ENCODE measurements at regions of chr16 and their contacts with region 1.

Region 1: GRCh38 chr16:47699106-47699505 is 238.0 kb downstream of the PHKB start:
- DNase-seq: no peak
- H3K4me3 ChIP-seq: no peak overlapping the region
- H3K27ac ChIP-seq: no peak overlapping the region
- H3K4me1 ChIP-seq: no peaks in the 10 kb centered on the region
- H3K27me3 ChIP-seq: no peaks in the 10 kb centered on the region
- CTCF ChIP-seq: no peak
- POLR2A ChIP-seq: no peak

Region 2: DNA sequence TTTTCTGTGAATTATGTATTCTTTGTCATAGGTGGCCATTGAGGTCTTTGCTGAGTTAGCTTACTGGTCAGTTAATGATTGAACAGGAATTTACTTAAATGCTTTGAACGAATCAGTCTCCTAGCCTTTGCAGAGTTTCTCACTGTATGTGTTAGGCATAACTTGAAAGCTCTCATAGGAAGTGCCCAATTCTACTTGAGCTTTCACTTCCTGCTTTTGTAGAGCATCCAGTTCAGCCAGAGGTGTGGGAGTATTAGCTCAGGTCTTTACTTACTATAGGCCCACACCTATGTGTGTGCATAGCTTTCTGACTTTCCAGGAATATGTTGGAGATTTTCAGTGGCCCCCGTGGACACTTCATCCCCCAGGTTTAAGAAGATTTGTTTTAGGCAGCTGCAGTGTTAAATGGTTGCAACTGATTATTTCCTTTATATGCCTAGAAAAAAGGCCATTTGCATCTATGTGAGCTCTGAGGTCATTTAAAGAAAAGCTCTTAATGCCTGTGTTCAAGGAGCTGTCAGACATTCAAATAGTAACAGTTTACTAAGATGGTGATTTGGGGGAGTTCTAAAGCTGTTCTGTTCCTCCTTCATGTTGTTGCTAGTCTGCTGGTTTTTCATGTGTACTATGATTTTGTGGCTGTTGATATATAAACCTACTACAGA is 175.6 kb before region 1 on chr16:
- intact Hi-C with region 1: no loop called
- DNase-seq: no peak
- H3K4me3 ChIP-seq: no peak overlapping the region
- H3K27ac ChIP-seq: no peak overlapping the region
- H3K4me1 ChIP-seq: peaks cover 12 to 13% of the 10 kb centered on the region in 2 donors
- H3K27me3 ChIP-seq: no peaks in the 10 kb centered on the region
- CTCF ChIP-seq: no peak
- POLR2A ChIP-seq: no peak

Region 3: DNA sequence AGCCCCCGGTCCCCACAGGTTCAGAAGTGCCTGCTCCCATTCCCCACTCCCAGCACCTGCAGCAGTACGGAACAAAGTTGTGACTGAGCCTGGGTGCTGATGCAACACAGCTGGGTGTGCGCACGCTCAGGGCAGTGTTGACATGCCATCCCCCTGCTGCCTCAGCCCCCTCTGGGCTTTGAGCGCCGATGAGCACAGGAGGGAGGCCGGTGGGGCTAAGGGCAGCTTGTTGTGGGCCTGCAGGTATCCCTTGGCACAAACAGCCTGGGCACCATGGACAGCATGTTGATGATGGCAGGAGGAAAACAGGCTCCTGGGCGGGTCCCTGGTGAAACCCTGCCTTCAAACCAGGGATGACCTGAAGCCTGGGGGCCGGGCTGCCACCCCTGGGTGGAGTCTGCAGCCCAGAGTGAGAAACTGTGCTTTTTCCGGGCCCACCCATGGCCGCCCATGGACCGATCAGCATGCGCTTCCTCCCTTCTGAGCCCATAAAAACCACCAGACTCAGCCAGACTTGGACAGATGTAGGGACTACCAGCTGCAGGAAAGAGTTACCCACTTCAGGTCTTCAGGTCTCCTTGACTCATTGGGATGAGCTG is 62.5 kb before region 1 on chr16:
- intact Hi-C with region 1: loop called in 1 of 2 experiments (anchors 10 kb)
- DNase-seq: no peak
- H3K4me3 ChIP-seq: no peak overlapping the region
- H3K27ac ChIP-seq: no peak overlapping the region
- H3K4me1 ChIP-seq: no peaks in the 10 kb centered on the region
- H3K27me3 ChIP-seq: no peaks in the 10 kb centered on the region
- CTCF ChIP-seq: no peak
- POLR2A ChIP-seq: no peak